Right ventricle myocardium superior (tissue), 1 donor: ENCODE measurements at regions of chr14 and their contacts with region 1.

Region 1: DNA sequence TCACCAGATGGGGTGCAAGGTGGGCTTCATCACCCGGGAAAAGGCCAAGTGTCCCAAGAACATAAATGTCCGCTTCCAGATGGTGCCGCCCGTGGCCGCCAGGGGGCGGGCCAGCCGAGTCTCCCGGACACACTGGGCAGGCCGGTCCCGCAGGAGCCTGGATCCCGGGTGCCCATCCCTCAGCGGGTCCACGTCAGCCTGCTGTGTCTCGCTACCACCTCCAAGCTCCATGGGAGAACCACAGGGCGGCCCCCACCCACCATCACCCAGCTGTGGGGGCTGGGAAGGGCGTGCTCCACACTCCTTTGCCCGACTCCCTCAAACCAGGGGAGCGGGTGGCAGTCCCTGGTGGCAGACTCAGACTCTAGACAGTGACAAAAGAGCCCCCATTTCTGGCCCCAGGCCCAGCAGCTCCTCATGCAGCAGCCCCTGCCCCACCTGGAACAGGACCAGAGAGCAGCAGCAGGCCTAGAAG is 22.0 kb upstream of the NUDT14 start:
- DNase-seq: peak; percentile 88
- ATAC-seq: peak; percentile 50

Region 2: DNA sequence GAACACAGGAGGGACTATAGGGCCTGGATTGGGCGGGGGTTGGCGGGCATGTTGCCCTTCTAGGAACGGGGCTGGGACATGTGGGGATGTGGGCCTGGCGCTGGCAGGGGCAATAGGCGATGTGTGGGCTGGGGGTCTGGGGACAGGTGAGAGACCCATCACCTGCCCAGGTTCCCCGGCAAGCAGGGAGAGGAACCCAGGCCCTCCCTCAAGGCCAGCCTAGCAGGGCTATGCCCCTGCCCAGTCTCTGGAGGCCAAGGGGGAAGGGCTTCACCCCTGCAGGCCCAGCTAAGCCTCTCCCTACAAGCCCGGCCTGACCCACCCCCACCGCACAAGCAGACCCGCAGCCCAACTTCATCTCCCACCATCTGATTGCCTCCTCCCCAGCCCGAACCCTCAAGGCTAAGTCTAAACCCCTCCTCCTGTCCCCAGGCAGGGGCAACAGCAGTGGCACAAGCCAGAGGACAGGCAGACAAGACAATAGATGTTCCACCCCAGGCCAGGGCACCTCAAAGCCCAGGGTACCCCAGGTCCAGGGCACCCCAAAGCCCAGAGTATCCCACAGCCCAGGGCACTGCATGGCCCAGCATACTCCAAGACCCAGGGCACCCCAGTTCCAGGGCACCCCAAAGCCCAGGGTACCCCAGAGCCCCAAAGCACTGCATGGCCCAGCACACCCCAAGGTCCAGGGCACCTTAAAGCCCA is 41.0 kb before region 1 on chr14:
- intact Hi-C with region 1: no loop called
- DNase-seq: no peak
- ATAC-seq: peak; percentile 46

Region 3: GRCh38 chr14:105281371-105282097 is 78.4 kb after region 1 on chr14:
- intact Hi-C with region 1: loop called (anchors 5 kb)
- DNase-seq: no peak
- ATAC-seq: peak; percentile 47

Region 4: GRCh38 chr14:105351920-105352851 is 149.1 kb after region 1 on chr14:
- intact Hi-C with region 1: loop called (anchors 5 kb)
- DNase-seq: peak; percentile 82
- ATAC-seq: peak; percentile 92

Region 5: DNA sequence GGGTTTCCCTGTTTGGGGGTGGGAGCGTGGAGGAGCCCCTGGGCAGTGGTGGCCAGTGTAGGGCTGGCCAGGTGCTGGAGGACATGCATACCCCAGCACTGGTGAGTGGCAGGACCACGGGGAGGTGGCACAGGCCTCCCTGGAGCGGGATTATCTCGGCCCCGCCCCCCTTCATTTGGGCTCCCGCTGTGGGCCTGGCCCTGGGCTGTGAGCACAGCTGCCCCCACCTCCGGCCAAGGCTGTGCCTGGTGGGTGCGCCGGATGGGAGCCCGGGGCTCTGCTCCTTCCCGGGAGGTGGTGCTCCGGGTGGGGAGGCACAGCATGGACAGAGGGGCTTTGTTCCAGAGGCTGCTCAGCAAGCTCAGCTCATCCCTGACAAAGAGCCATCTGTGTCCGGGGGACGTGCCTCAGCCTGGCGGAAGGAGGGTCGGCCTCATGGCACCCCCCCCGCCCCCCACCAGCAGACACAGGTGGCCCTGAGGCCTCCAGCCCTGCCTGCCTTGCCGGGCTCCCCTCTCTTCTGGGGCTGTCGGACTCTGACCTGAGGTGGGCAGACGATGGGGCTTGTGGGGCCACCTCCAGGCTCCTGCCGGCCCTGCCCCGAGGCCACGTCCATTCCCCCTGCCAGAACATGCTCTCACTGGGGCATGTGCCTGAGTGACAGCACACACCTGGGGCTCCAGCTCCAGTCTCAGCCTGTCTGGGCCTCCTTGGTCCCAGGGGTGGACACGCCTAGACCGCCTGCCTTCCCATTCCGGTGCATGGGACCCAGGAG is 296.3 kb after region 1 on chr14:
- intact Hi-C with region 1: no loop called
- DNase-seq: peak; percentile 37
- ATAC-seq: no peak